Mammary epithelial cell (primary cell): ENCODE measurements at regions of chr15 and their contacts with region 1.

Region 1: DNA sequence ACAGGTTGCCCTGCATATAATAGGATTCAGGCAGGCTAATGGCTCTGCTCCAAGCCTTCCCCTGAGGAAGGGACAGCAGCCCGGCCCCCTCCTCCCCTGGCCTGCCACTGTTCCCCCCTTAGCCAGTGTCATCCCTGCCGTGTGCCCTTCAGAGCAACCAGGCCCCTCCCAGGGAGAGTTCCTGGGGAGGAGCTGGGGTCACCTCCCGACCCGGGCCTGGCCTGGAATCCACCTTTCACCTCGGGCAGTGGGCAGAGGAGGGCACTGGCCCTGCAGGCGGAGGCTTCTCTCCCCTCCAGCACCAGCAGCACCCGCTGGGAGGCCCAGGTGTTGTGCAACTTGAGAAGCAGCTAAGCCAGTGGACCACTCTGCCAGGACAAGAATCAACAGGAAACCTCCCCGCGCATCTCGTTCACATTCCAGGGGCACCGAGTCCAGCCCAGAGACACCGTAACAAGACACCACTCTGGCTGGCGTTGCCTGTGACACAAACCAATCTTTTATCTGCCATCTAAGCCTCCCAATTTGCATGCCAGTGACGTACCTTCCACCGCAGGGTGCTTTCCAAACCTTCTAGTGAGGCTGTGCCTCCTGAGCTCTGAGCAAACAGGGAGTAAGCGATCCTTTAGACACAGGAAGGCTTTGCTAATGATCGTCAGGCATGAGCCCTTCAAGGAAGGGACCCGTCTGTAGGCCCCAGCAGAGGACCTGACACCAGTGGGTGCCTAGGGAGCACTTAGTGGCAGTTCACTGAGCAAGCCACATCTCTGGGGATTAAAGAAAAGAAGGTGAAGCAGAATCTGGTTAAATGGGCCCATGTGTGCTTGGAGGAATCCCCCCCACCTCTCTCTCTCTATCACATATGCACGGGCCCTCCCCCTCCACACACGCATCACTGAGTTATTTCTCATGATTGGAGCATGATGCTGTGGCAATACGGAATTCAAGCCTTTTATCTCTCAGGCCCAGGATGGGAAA is 98.9 kb upstream of the TLE3 start:
- DNase-seq: peak; percentile 100
- H3K4me3 ChIP-seq: no peak overlapping the region
- H3K27ac ChIP-seq: peak overlapping the region; percentile 90
- H3K4me1 ChIP-seq: peaks cover 33% of the 10 kb centered on the region
- H3K27me3 ChIP-seq: no peaks in the 10 kb centered on the region
- CTCF ChIP-seq: peak in 1 of 2 donors; percentile 26

Region 2: GRCh38 chr15:70023064-70023768 is 173.4 kb before region 1 on chr15:
- CTCF ChIA-PET with region 1: no interaction called
- dilution Hi-C with region 1: no loop called
- in situ Hi-C with region 1: no loop called
- intact Hi-C with region 1: loop called (anchors 1 kb)
- DNase-seq: peak; percentile 89
- H3K4me3 ChIP-seq: no peak overlapping the region
- H3K27ac ChIP-seq: peak overlapping the region; percentile 38
- H3K4me1 ChIP-seq: peaks cover 24% of the 10 kb centered on the region
- H3K27me3 ChIP-seq: peaks cover 11% of the 10 kb centered on the region
- CTCF ChIP-seq: no peak

Region 3: DNA sequence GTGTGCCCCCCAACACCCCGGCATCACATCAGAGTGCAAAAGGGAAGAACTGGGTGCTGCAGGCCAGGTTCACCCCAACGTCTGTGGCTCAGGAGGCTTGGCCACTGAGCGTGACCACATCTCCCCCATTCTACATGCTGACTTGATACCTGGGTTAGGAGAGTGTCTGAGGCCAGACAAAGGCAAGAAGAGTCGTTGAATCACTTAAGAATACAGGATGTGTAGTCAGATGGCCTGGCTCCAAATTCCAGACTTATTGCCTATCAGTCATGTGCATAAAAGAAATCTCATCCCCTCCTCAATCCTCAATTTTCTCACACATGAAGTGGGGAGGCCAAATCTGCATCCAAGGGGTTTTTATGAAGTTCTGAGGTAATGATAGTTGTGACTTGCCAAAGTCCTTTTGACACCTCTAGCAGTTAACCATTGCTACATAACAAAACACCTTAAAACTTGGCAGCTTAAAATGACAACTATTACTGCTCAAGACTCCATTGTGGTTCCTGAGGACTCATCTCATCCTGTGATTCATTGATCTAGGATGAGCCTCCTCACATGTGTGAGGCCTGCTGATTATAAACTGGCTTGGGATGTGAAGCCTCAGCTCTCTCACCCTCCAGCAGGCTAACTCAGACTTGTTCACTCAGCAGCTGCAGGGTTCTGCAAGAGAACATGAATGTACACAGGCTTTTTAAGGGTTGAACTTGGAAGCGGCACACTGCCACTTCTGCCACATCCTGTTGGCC is 39.9 kb after region 1 on chr15:
- CTCF ChIA-PET with region 1: no interaction called
- dilution Hi-C with region 1: no loop called
- in situ Hi-C with region 1: no loop called
- intact Hi-C with region 1: loop called (anchors 1 kb)
- DNase-seq: peak; percentile 92
- H3K4me3 ChIP-seq: no peak overlapping the region
- H3K27ac ChIP-seq: peak overlapping the region; percentile 53
- H3K4me1 ChIP-seq: peaks cover 27% of the 10 kb centered on the region
- H3K27me3 ChIP-seq: no peaks in the 10 kb centered on the region
- CTCF ChIP-seq: no peak

Region 4: GRCh38 chr15:70318594-70319465 is 122.2 kb after region 1 on chr15:
- CTCF ChIA-PET with region 1: no interaction called
- dilution Hi-C with region 1: no loop called
- in situ Hi-C with region 1: no loop called
- intact Hi-C with region 1: loop called (anchors 5 kb)
- DNase-seq: peak; percentile 17
- H3K4me3 ChIP-seq: no peak overlapping the region
- H3K27ac ChIP-seq: no peak overlapping the region
- H3K4me1 ChIP-seq: peaks cover 8% of the 10 kb centered on the region
- H3K27me3 ChIP-seq: no peaks in the 10 kb centered on the region
- CTCF ChIP-seq: no peak

Region 5: GRCh38 chr15:70401709-70402108 is 205.1 kb after region 1 on chr15:
- CTCF ChIA-PET with region 1: no interaction called
- dilution Hi-C with region 1: no loop called
- in situ Hi-C with region 1: no loop called
- intact Hi-C with region 1: no loop called
- DNase-seq: no peak
- H3K4me3 ChIP-seq: no peak overlapping the region
- H3K27ac ChIP-seq: no peak overlapping the region
- H3K4me1 ChIP-seq: no peaks in the 10 kb centered on the region
- H3K27me3 ChIP-seq: peaks cover 4% of the 10 kb centered on the region
- CTCF ChIP-seq: no peak